Panc1 (cell line): ENCODE measurements at regions of chr12 and their contacts with region 1.

Region 1: GRCh38 chr12:51980051-51980808 is 26.5 kb upstream of the TAMALIN start:
- DNase-seq: peak; percentile 57
- ATAC-seq: peak; percentile 97
- H3K4me3 ChIP-seq: no peak overlapping the region
- H3K27ac ChIP-seq: no peak overlapping the region
- H3K4me1 ChIP-seq: no peaks in the 10 kb centered on the region
- H3K27me3 ChIP-seq: no peaks in the 10 kb centered on the region
- CTCF ChIP-seq: peak; percentile 98

Region 2: GRCh38 chr12:51829011-51829481 is 151.2 kb before region 1 on chr12:
- CTCF ChIA-PET with region 1: no interaction called
- POLR2A ChIA-PET with region 1: interaction called, 27 read pairs
- in situ Hi-C with region 1: no loop called
- intact Hi-C with region 1: no loop called
- DNase-seq: no peak
- ATAC-seq: no peak
- H3K4me3 ChIP-seq: no peak overlapping the region
- H3K27ac ChIP-seq: no peak overlapping the region
- H3K4me1 ChIP-seq: no peaks in the 10 kb centered on the region
- H3K27me3 ChIP-seq: peaks cover 3% of the 10 kb centered on the region; the same call in 1 of the 2 replicates
- CTCF ChIP-seq: no peak

Region 3: DNA sequence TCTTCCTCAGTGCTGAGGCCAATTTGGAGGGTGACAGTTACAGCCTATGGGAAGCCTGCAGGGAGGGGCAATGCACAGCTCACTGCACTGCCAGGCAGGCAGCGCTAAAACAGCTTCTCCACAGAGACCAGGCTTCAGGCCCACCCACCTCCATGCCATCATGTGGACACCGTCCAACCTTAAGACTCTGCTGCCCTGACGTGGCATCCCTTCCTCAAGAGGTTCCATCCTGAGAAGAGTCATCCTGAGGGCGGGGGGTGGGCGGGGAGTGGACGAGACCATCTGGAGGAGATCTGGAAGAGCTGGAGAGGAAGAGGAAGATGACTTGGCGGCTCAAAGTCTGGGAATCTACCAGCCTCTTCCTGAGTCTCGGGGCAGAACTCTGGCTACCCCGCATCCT is 81.3 kb before region 1 on chr12:
- CTCF ChIA-PET with region 1: no interaction called
- POLR2A ChIA-PET with region 1: no interaction called
- in situ Hi-C with region 1: no loop called
- intact Hi-C with region 1: loop called (anchors 5 kb)
- DNase-seq: no peak
- ATAC-seq: no peak
- H3K4me3 ChIP-seq: no peak overlapping the region
- H3K27ac ChIP-seq: no peak overlapping the region
- H3K4me1 ChIP-seq: no peaks in the 10 kb centered on the region
- H3K27me3 ChIP-seq: no peaks in the 10 kb centered on the region
- CTCF ChIP-seq: no peak